GM10248 (cell line): ENCODE measurements at regions of chr2 and their contacts with region 1.

Region 1: DNA sequence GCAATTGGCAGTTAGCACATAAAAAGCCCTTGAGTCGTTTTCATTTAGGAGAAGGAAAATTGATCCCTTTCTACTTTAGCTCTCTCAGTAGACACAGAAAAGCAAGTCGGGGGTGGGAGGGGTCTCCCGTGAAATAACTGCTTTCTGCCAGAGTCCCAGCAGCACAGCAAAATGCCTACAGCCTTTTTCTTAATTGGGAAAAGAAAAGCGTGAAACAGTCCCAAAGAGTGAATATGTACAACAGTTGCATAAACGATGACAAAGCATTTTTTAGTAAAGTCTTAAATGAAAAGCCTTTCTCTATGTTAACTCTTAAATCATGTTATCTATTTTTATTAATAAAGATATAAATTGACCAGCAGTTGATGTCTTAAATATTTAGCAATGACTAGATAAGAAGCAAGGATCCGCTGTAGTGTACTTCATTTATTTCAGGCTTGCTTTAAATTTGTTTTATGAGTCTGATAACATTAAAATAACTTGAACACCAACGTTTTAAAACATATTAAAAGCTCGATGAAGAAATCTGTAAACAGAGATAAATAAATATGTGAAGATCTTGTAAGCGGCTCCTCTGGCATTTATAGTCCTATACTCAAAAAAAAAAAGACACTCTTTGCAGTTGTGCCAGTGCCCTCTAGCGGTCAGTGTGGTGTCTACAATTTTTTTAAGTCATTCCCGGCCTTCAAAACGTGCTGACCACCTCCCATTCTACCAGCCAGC is 42.3 kb upstream of the ATIC start:
- DNase-seq: peak; percentile 47
- CTCF ChIP-seq: peak; percentile 75

Region 2: DNA sequence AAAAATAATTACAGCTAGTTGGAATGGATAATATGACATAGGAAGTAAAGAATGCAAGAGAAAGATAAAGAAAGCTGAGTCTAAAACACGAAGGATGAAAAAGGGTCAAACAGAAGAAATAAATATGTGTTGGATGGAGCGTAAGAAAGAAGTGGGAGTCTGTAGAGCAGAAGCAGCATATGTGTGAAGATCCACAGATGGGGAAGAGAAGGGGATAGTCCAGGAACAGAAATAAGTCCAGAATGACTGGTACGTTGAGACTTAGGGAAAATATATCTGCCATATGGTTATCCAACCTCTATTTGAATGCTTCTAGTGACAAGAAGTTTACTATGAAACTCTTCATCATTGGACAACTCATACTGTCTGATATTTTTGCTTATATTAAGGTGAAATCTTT is 149.2 kb before region 1 on chr2:
- CTCF ChIA-PET with region 1: no interaction called
- POLR2A ChIA-PET with region 1: no interaction called
- DNase-seq: no peak
- CTCF ChIP-seq: no peak

Region 3: DNA sequence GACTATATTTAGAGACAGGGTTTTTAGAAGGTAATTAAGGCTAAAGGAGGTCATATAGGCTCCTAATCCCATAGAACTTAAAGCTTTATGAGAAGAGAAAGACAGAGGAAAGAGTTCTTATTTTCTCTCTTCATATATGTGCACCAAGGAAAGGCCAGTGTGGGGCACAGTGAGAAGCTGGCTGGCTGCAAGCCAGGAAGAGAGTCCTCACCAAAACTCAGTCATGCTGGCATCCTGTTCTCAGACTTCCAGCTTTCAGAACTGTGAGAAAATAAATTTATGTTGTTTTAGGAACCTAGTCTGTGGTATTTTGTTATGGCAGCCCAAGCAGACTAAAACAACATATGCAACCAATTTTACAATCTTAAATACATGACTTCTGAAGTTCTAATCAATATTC is 10.8 kb after region 1 on chr2:
- CTCF ChIA-PET with region 1: interaction called, 22 read pairs
- POLR2A ChIA-PET with region 1: interaction called, 5 read pairs
- DNase-seq: no peak
- CTCF ChIP-seq: no peak